ENCODE measurements at regions of chr15 and their contacts with region 1.

Region 1: DNA sequence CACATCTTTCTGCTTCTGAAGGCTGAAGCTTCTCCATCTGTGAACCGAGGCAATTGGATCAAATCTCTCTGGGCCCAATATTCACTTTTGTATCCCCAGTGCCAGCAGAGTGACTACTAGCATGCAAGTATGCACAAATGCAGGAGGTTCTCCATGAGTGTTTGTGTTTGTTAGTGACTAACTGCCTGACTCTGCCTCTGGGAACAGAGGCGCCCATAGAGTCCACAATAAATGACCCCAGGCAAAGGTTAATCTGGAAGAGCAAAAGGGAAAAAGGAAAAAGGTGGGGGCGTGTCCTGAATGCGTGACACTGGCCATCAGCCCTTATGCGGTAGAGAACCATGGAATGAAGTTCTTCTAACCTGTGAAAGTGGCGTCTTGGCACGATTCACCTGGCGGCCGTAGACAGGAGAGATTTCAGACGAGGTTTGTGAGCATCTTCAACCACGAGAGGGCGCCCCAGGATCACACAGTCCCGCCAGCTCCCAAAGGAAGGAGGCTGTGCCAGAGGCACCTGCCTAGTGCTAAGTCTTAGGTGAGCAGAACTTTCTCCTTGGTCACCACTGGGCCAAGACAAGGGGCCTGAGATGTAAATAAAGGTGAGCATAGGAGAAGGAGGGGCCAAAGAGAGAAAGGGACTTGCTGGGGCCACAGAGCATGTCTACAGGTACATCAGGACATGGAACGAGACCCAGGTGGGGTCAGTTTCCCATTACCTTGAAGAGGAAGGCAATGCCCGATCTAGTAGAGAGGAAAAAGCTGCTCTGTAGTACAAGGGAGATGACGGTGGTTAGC is 44.2 kb downstream of the RBPMS2 start:
- DNase-seq: peak; percentile 88
- ATAC-seq: peak; percentile 72 to 74

Region 2: DNA sequence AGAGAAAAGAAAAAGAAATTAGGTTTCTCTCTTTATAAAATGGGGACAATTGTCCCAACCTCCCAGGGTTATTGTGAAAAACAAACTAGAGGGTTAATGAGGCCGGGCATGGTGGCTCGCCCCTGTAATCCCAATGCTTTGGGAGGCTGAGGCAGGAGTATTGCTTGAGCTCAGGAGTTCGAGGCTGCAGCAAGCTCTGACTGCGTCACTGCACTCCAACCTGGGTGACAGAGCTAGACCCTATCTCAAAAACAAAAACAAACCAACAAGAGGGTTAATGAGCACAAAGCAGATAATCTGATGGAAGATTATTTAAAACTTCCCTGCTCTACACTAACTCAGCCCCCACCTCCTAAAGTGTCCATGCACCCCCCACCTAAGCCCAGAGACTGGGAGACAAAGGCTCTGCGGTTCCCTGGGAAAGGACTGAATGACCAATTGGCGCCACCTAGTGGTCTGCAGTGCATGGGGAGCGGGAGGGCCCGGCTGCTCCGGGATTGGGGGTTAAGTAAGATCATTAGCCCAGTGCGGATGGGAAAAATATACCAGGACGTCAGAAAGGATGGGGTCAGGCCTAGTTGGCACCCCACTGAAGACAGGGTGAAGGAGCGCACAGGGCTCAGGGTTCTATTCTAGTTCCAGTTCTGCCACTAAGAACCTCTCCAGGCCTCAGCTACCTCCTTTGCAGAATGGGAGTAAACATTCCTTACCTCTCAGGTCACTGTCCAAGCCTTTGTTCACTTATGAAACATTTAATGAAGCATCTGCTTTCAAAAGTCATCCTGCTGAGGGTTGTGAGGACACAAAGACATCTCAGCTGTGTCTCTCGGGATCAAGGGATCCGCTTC is 78.7 kb after region 1 on chr15:
- intact Hi-C with region 1: loop called (anchors 2 to 5 kb)
- DNase-seq: peak; percentile 87
- ATAC-seq: peak; percentile 82 to 85

Region 3: DNA sequence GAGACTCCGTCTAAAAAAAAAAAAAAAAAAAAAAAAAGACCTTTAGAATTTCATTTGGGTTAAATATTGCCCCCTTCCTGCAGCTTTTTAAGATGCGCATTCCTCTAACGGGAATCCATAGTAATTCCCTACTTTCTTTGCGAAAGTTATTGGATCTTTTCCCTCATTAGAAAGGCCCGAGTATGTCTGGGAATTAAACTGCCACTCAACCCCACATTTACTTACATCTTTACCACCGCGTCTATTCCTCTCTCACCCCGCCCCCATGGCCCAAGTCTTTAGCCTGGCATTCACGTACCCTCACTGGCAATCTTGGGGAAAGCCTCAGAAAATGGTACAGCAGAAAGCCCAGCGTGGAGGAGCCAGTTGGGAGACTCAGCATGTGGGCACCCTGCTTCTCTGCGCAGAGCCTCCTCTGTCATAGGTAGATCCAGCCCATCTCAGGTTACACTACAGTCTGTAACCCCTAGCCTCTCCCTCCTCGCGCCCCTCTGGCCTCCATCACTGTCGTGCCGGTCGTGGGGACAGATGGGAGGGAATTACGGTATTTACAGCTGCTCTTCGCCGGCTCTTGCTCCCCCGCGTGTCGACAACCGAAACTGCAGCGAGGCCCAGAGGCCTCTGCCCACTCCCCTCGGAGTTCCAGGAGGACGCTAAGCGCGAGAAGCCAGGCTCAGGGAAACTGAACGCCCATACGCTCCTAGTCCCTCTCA is 174.1 kb after region 1 on chr15:
- intact Hi-C with region 1: loop called (anchors 2 to 5 kb)
- DNase-seq: peak; percentile 81
- ATAC-seq: peak; percentile 92 to 94

Region 4: DNA sequence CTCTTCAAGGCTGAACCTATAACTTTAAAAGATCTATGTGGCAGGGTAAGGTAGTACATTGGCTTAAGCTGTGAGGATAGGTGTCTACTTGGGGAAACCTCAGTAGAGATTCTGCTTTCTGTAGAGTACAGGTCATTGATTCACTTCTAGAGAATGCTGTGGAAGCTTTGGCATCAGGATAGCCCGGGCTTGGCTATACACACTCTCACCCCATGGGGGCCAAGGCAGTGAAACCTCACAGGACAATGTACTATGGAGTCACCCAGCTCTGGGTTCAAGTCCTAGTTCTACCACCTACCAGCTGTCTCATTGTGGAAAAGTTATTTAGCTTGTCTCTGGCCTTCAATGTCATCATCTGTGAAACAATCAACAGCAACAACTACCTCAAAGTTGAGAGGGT is 289.2 kb after region 1 on chr15:
- intact Hi-C with region 1: no loop called
- DNase-seq: no peak
- ATAC-seq: no peak

Region 5: DNA sequence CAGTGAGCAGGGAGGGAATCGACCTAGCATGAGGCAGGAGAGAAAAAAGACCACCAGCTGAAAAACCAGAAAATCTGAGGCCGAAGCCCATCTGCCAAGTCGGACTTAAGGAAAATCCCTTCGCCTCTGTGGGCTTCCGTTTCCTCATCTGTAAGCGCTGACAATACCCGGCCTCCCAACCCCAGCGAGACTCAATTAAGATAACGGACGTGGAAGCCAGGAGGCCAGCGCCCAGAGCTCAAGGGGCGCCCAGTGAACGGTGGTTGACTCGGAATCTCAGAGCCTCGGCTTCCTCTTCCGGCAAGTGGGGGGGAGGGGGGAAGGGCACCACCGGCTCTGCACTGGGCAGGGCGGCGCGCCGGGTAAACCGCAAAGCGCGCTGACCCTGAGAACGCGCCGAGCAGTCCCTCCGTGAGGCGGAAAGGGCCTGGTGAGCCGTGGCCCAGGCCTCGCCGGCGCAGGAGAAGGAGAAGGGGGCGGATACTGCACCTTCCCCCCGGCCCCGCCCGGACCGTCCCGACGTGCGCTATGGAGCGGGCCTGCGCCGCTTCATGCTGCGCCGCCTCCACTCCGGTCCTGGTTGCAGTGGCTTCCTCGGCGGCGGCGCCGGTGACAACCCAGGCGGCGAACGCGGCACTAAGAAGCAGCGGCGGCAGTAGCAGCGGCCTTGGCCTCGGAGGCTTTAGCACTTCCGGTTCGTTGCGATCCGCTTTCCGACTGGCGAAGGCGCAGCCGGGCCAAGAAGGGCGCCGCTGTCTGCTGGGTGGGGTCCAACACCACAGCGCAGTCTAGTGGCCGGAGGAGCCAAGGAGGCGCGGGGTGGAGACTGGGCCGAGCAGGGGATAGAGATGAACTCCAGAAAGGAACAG is 786.0 kb after region 1 on chr15 and contains the start of gene DPP8:
- intact Hi-C with region 1: no loop called
- DNase-seq: peak; percentile 94
- ATAC-seq: peak; percentile 98
- total RNA-seq, gene DPP8: 24.8 to 34.9 TPM

Measured in left cardiac atrium (tissue), 4 donors.